Endothelial cell of umbilical vein (primary cell): ENCODE measurements at regions of chr12 and their contacts with region 1.

Region 1: GRCh38 chr12:111812881-111813741 is 28.9 kb upstream of the MAPKAPK5 start:
- DNase-seq: peak; percentile 86
- H3K4me3 ChIP-seq: no peak overlapping the region
- H3K27ac ChIP-seq: no peak overlapping the region
- H3K4me1 ChIP-seq: no peaks in the 10 kb centered on the region
- H3K27me3 ChIP-seq: peaks cover 2 to 3% of the 10 kb centered on the region in 2 experiments
- CTCF ChIP-seq: peak; percentile 76 to 78
- POLR2A ChIP-seq: no peak

Region 2: DNA sequence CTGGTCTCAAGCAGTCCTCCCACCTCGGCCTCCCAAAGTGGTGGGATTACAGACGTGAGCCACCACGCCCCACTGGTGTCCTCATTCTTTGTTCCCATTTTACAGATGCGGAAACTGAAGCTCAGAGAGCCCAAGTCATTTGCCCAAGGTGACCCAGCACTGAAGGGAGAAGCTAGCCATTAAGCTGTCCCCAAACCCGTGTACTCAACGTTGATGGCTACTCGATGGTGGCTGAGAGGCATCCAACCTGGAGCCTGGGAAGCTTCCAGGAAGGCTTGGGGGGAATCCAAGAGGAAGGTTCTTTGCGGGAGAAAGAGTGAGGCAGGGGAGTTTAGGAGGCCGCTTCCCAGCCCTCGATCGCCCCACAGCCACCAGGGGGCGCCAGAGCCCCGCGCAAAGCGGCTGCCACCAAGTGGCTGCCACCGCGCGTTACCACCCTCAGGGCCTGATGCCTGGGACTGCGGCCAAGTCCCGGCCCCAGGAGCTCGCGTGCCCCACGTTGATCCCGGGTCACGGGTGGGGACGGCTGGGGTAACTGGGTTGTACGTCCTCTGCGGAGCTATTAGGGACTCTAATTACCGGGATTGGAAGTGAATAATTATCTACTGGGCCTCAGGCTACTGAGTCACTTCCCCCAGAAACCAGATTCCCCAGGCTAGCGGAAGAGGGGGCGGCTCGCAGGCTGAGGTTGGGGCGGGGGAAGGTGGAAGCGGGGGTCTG is 416.2 kb before region 1 on chr12:
- CTCF ChIA-PET with region 1: interaction called, 11 read pairs
- POLR2A ChIA-PET with region 1: no interaction called
- dilution Hi-C with region 1: no loop called
- intact Hi-C with region 1: no loop called
- DNase-seq: peak; percentile 96
- H3K4me3 ChIP-seq: no peak overlapping the region
- H3K27ac ChIP-seq: peak overlapping the region; percentile 81
- H3K4me1 ChIP-seq: peaks cover 27% of the 10 kb centered on the region
- H3K27me3 ChIP-seq: no peaks in the 10 kb centered on the region
- CTCF ChIP-seq: peak; percentile 99 to 100
- POLR2A ChIP-seq: peak; percentile 57

Region 3: GRCh38 chr12:111557271-111558106 is 255.6 kb before region 1 on chr12:
- CTCF ChIA-PET with region 1: no interaction called
- POLR2A ChIA-PET with region 1: no interaction called
- dilution Hi-C with region 1: no loop called
- intact Hi-C with region 1: no loop called
- DNase-seq: no peak
- H3K4me3 ChIP-seq: no peak overlapping the region
- H3K27ac ChIP-seq: peak overlapping the region; percentile 8
- H3K4me1 ChIP-seq: peaks cover 4% of the 10 kb centered on the region
- H3K27me3 ChIP-seq: no peaks in the 10 kb centered on the region
- CTCF ChIP-seq: no peak
- POLR2A ChIP-seq: no peak

Region 4: GRCh38 chr12:111692575-111693210 is 120.4 kb before region 1 on chr12:
- CTCF ChIA-PET with region 1: interaction called, 28 read pairs
- POLR2A ChIA-PET with region 1: no interaction called
- dilution Hi-C with region 1: loop called (anchors 25 kb)
- intact Hi-C with region 1: no loop called
- DNase-seq: no peak
- H3K4me3 ChIP-seq: no peak overlapping the region
- H3K27ac ChIP-seq: no peak overlapping the region
- H3K4me1 ChIP-seq: no peaks in the 10 kb centered on the region
- H3K27me3 ChIP-seq: no peaks in the 10 kb centered on the region
- CTCF ChIP-seq: peak; percentile 26 to 30
- POLR2A ChIP-seq: no peak

Region 5: GRCh38 chr12:111748151-111748672 is 64.9 kb before region 1 on chr12:
- CTCF ChIA-PET with region 1: interaction called, 262 read pairs
- POLR2A ChIA-PET with region 1: interaction called, 7 read pairs
- dilution Hi-C with region 1: no loop called
- intact Hi-C with region 1: loop called (anchors 1 kb)
- DNase-seq: peak; percentile 40
- H3K4me3 ChIP-seq: no peak overlapping the region
- H3K27ac ChIP-seq: peak overlapping the region; percentile 7
- H3K4me1 ChIP-seq: peaks cover 18% of the 10 kb centered on the region
- H3K27me3 ChIP-seq: no peaks in the 10 kb centered on the region
- CTCF ChIP-seq: no peak
- POLR2A ChIP-seq: no peak

Region 6: GRCh38 chr12:111766608-111767361 is 46.3 kb before region 1 on chr12 and contains the start of gene ALDH2:
- CTCF ChIA-PET with region 1: interaction called, 19 read pairs
- POLR2A ChIA-PET with region 1: no interaction called
- dilution Hi-C with region 1: no loop called
- intact Hi-C with region 1: no loop called
- DNase-seq: peak; percentile 77
- H3K4me3 ChIP-seq: peak within 1 kb of the TSS; percentile 58 to 75 (median 68)
- H3K27ac ChIP-seq: peak within 1 kb of the TSS; percentile 58
- H3K4me1 ChIP-seq: peaks cover 18% of the 10 kb centered on the region
- H3K27me3 ChIP-seq: peaks cover 0 to 3% of the 10 kb centered on the region in 2 experiments
- CTCF ChIP-seq: no peak
- POLR2A ChIP-seq: peak; percentile 82
- total RNA-seq, gene ALDH2: 71.4 and 86.5 TPM in 2 replicates

Region 7: DNA sequence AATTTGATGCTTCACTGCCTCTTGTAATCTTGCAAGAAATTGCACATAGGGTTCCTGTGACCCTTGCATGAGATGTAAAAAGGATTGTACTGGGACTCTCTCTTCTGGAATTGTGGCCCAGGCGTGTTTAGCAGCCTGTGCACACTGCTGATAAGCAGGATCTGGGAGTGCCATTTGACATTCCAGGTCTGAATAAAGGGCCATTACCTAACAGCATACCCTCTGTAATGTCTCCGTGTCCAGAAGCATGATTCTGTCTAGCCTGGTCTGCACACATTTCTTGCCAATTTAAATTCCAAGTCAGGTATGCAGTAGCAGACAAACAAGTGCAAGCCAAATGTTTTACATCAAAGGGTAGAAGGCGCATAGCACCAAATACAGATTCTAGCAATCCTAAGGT is 10.8 kb after region 1 on chr12:
- CTCF ChIA-PET with region 1: interaction called, 12 read pairs
- POLR2A ChIA-PET with region 1: no interaction called
- dilution Hi-C with region 1: no loop called
- intact Hi-C with region 1: no loop called
- DNase-seq: no peak
- H3K4me3 ChIP-seq: no peak overlapping the region
- H3K27ac ChIP-seq: no peak overlapping the region
- H3K4me1 ChIP-seq: no peaks in the 10 kb centered on the region
- H3K27me3 ChIP-seq: peaks cover 16 to 24% of the 10 kb centered on the region in 2 experiments
- CTCF ChIP-seq: no peak
- POLR2A ChIP-seq: no peak